HCT116 (cell line): ENCODE measurements at regions of chr2 and their contacts with region 1.

Region 1: DNA sequence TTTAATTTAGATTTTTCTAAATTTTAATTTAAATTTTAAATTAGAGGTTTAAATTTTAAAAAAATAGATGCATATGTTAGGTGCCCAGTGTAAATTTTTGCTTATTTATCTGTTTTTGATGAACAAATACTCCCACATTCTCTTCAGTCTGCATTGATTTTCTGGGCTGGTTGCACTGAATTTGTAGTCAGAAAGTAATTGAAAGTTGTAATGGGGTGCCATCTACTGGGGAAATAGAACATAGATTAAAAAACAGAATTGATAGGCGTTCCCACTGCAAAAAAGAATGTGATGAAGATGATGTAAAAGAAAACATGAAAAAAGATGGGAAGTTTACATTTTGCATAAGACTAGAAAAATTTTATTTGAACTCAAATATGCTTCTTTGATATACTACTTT is 51.7 kb upstream of the CCDC85A start:
- DNase-seq: peak; percentile 40
- ATAC-seq: peak; percentile 67
- H3K4me3 ChIP-seq: no peak overlapping the region
- H3K27ac ChIP-seq: no peak overlapping the region
- H3K4me1 ChIP-seq: no peaks in the 10 kb centered on the region
- H3K27me3 ChIP-seq: no peaks in the 10 kb centered on the region
- CTCF ChIP-seq: peak; percentile 43 to 66 (median 64); a peak in 5 of 6 replicates
- POLR2A ChIP-seq: no peak
- RAD21 ChIP-seq: peak; percentile 73

Region 2: GRCh38 chr2:55718165-55719008 is 413.8 kb before region 1 on chr2:
- CTCF ChIA-PET with region 1: interaction called, 4 read pairs
- POLR2A ChIA-PET with region 1: no interaction called
- RAD21 ChIA-PET with region 1: no interaction called
- intact Hi-C with region 1: loop called (anchors 2 kb)
- DNase-seq: peak; percentile 59
- ATAC-seq: peak; percentile 76
- H3K4me3 ChIP-seq: no peak overlapping the region
- H3K27ac ChIP-seq: no peak overlapping the region
- H3K4me1 ChIP-seq: no peaks in the 10 kb centered on the region
- H3K27me3 ChIP-seq: no peaks in the 10 kb centered on the region
- CTCF ChIP-seq: peak; percentile 80 to 94 (median 82)
- POLR2A ChIP-seq: no peak
- RAD21 ChIP-seq: peak; percentile 88

Region 3: GRCh38 chr2:55771612-55772011 is 360.5 kb before region 1 on chr2:
- CTCF ChIA-PET with region 1: interaction called, 8 read pairs
- POLR2A ChIA-PET with region 1: no interaction called
- RAD21 ChIA-PET with region 1: no interaction called
- intact Hi-C with region 1: loop called (anchors 2 kb)
- DNase-seq: peak; percentile 16
- ATAC-seq: no peak
- H3K4me3 ChIP-seq: no peak overlapping the region
- H3K27ac ChIP-seq: no peak overlapping the region
- H3K4me1 ChIP-seq: no peaks in the 10 kb centered on the region
- H3K27me3 ChIP-seq: no peaks in the 10 kb centered on the region
- CTCF ChIP-seq: peak; percentile 48 to 74 (median 71); a peak in 5 of 6 replicates
- POLR2A ChIP-seq: no peak
- RAD21 ChIP-seq: peak; percentile 77

Region 4: GRCh38 chr2:56009758-56010458 is 122.2 kb before region 1 on chr2:
- CTCF ChIA-PET with region 1: no interaction called
- POLR2A ChIA-PET with region 1: no interaction called
- RAD21 ChIA-PET with region 1: no interaction called
- intact Hi-C with region 1: loop called (anchors 5 kb)
- DNase-seq: peak; percentile 26
- ATAC-seq: peak; percentile 47; the same call in 1 of the 2 replicates
- H3K4me3 ChIP-seq: no peak overlapping the region
- H3K27ac ChIP-seq: no peak overlapping the region
- H3K4me1 ChIP-seq: no peaks in the 10 kb centered on the region
- H3K27me3 ChIP-seq: no peaks in the 10 kb centered on the region
- CTCF ChIP-seq: peak; percentile 55 to 69 (median 58); a peak in 5 of 6 replicates
- POLR2A ChIP-seq: no peak
- RAD21 ChIP-seq: peak; percentile 79

Region 5: GRCh38 chr2:56077352-56077915 is 54.7 kb before region 1 on chr2:
- CTCF ChIA-PET with region 1: interaction called, 23 read pairs
- POLR2A ChIA-PET with region 1: no interaction called
- RAD21 ChIA-PET with region 1: no interaction called
- intact Hi-C with region 1: loop called (anchors 1 kb)
- DNase-seq: peak; percentile 39
- ATAC-seq: peak; percentile 74
- H3K4me3 ChIP-seq: no peak overlapping the region
- H3K27ac ChIP-seq: no peak overlapping the region
- H3K4me1 ChIP-seq: no peaks in the 10 kb centered on the region
- H3K27me3 ChIP-seq: 0 out of 2 replicates have a peak, but pooled peaks cover 4% of the 10 kb centered on the region
- CTCF ChIP-seq: peak; percentile 40 to 76 (median 75); a peak in 5 of 6 replicates
- POLR2A ChIP-seq: no peak
- RAD21 ChIP-seq: peak; percentile 50

Region 6: DNA sequence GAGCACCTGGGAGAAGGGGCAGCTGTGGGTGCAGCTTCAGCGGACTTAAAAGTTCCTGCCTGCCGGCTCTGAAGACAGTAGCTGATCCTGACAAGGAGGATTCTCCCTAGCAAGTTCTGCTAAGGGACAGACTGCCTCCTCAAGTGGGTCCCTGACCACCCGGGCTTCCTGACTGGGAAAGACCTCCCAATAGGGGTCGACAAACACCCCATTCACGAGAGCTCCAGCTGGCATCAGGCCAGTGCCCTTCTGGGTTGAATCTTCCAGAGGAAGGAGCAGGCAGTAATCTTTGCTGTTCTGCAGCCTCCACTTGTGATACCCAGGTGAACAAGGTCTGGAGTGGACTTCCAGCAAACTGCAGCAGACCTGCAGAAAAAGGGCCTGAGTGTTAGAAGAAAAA is 684.5 kb after region 1 on chr2:
- CTCF ChIA-PET with region 1: no interaction called
- POLR2A ChIA-PET with region 1: no interaction called
- RAD21 ChIA-PET with region 1: no interaction called
- intact Hi-C with region 1: no loop called
- DNase-seq: no peak
- ATAC-seq: no peak
- H3K4me3 ChIP-seq: no peak overlapping the region
- H3K27ac ChIP-seq: no peak overlapping the region
- H3K4me1 ChIP-seq: no peaks in the 10 kb centered on the region
- H3K27me3 ChIP-seq: no peaks in the 10 kb centered on the region
- CTCF ChIP-seq: no peak
- POLR2A ChIP-seq: no peak
- RAD21 ChIP-seq: no peak

Region 7: GRCh38 chr2:57516698-57517340 is 1384.7 kb after region 1 on chr2:
- CTCF ChIA-PET with region 1: interaction called, 6 read pairs
- POLR2A ChIA-PET with region 1: no interaction called
- RAD21 ChIA-PET with region 1: no interaction called
- intact Hi-C with region 1: loop called (anchors 5 kb)
- DNase-seq: peak; percentile 41
- ATAC-seq: peak; percentile 78
- H3K4me3 ChIP-seq: no peak overlapping the region; a peak in 1 of 4 replicates
- H3K27ac ChIP-seq: no peak overlapping the region
- H3K4me1 ChIP-seq: no peaks in the 10 kb centered on the region
- H3K27me3 ChIP-seq: no peaks in the 10 kb centered on the region
- CTCF ChIP-seq: peak in 2 of 3 experiments; percentile 43 to 70; a peak in 3 of 6 replicates
- POLR2A ChIP-seq: no peak
- RAD21 ChIP-seq: peak; percentile 80